ENCODE measurements at regions of chr22 and their contacts with region 1.

Region 1: GRCh38 chr22:35575116-35575748 is 34.6 kb downstream of the RASD2 start:
- DNase-seq: no peak
- H3K4me3 ChIP-seq: no peak overlapping the region
- H3K27ac ChIP-seq: no peak overlapping the region
- H3K4me1 ChIP-seq: no peaks in the 10 kb centered on the region
- H3K27me3 ChIP-seq: no peaks in the 10 kb centered on the region
- CTCF ChIP-seq: no peak

Region 2: GRCh38 chr22:35430897-35431322 is 144.3 kb before region 1 on chr22:
- intact Hi-C with region 1: loop called (anchors 5 kb)
- DNase-seq: peak; percentile 86 to 96 (median 91)
- H3K4me3 ChIP-seq: no peak overlapping the region
- H3K27ac ChIP-seq: no peak overlapping the region
- H3K4me1 ChIP-seq: peaks cover 0 to 4% (median 2%) of the 10 kb centered on the region in 3 donors
- H3K27me3 ChIP-seq: no peaks in the 10 kb centered on the region
- CTCF ChIP-seq: peak; percentile 94

Region 3: DNA sequence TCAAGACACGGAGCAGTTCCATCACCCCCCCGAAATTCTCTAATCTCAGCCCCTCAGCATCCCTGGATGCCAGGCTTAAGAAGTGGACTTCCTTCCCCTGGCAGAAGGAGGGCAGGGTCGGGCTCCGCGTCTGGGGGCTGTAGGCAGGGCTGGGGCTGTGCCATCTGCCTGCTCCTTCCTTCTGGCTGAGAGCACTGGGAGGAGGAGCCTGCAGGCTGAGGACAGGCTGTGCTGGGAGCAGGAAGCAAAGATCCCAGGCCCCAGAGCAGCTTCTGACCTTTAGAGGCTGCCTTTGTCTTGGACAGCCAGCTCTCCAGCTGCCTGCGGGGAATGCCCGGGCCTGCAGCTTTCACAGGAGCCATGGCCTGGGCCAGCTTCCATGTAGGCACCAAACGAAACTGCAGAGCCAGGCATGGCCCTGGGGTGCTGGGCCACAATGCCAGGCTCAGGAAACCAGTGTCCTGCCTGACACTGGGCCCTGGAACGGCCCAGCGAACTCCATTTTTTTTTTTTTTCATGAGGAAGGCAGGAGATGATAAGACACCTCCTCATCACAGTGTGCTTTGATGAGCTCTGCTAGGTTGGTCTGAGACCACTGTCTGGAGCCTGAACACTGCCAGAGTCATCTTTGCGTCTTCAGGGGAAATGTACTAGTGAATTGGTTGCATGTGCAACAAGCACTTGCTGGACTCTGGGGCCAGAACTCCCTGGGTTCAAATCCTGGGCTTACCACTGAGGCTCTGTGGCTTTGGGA is 107.4 kb before region 1 on chr22:
- intact Hi-C with region 1: no loop called
- DNase-seq: peak in 2 of 5 donors; percentile 64 to 94
- H3K4me3 ChIP-seq: no peak overlapping the region
- H3K27ac ChIP-seq: peak overlapping the region; percentile 38 to 57
- H3K4me1 ChIP-seq: peaks cover 0 to 2% (median 0%) of the 10 kb centered on the region in 3 donors
- H3K27me3 ChIP-seq: no peaks in the 10 kb centered on the region
- CTCF ChIP-seq: no peak

Measured in kidney (tissue), 22 donors.